WTC11 (cell line): ENCODE measurements at regions of chr5 and their contacts with region 1.

Region 1: GRCh38 chr5:90783460-90784333 is 225.1 kb downstream of the ADGRV1 start:
- DNase-seq: peak; percentile 77
- ATAC-seq: peak; percentile 91
- H3K4me3 Mint-ChIP-seq: no peak overlapping the region
- H3K27ac Mint-ChIP-seq: no peak overlapping the region
- H3K4me1 Mint-ChIP-seq: no peaks in the 10 kb centered on the region
- H3K27me3 Mint-ChIP-seq: no peaks in the 10 kb centered on the region
- CTCF ChIP-seq: peak; percentile 78

Region 2: GRCh38 chr5:90438100-90438499 is 345.6 kb before region 1 on chr5:
- CTCF ChIA-PET with region 1: interaction called, 12 read pairs
- POLR2A ChIA-PET with region 1: no interaction called
- DNase-seq: no peak
- ATAC-seq: no peak
- H3K4me3 Mint-ChIP-seq: no peak overlapping the region
- H3K27ac Mint-ChIP-seq: no peak overlapping the region
- H3K4me1 Mint-ChIP-seq: peaks cover 8% of the 10 kb centered on the region
- H3K27me3 Mint-ChIP-seq: no peaks in the 10 kb centered on the region
- CTCF ChIP-seq: no peak

Region 3: DNA sequence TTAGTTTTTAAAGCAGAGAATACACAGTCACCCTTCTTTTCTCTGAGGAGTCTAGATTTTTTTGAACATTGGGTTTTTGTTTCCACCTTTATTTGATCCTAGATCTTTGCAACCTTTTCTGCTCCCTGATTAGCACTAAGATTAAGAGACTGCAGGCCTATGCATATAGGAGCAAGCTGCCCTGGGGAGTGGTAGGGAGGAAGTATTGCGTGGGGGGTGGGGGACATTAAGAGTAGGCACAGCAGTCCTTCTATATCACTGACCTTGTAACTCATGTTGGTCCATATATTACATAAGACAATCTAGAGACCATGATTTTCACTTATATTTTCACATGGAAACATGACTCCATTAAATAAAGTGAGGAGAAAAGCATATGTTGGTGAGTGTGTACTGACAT is 76.0 kb before region 1 on chr5:
- CTCF ChIA-PET with region 1: interaction called, 14 read pairs
- POLR2A ChIA-PET with region 1: no interaction called
- DNase-seq: no peak
- ATAC-seq: no peak
- H3K4me3 Mint-ChIP-seq: no peak overlapping the region
- H3K27ac Mint-ChIP-seq: no peak overlapping the region
- H3K4me1 Mint-ChIP-seq: peaks cover 6% of the 10 kb centered on the region
- H3K27me3 Mint-ChIP-seq: no peaks in the 10 kb centered on the region
- CTCF ChIP-seq: no peak

Region 4: DNA sequence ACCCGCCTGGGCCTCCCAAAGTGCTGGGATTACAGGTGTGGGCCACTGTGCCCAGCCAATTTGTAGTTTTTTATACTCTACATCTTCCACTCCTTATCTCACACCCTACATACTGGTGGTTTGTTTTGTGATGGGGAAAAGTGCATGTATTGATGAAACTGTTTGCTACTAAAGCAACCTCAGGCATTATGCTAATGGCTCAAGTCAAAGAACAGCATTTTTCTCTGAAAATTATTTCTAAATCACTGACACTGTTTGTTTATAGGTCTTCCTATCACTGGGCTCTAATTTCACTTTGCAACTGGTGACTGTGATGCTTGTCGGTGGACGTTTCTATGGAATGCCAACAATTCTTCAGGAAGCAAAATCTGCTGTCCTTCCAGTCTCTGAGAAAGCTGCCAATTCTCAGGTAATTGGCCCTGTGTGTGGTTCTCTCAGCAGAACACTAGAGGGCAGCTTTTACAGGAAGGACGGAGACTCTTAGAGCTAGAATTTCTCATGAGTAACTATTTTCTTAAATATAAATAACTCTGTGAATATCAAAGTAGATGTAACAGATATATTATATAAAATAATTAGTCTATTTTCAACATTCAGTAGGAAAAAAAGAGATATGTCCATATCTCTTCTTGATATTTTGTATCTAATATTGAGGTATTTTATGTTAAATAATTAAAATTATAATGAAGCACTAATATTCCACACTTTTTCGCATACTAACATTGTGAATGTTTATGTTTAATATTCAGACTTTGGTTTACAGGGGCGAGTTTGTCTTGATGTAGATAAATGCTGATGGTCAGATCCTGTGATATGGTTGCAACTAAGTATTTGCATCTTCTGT is 19.0 kb after region 1 on chr5:
- CTCF ChIA-PET with region 1: interaction called, 17 read pairs
- POLR2A ChIA-PET with region 1: no interaction called
- DNase-seq: peak; percentile 41
- ATAC-seq: peak; percentile 94
- H3K4me3 Mint-ChIP-seq: no peak overlapping the region
- H3K27ac Mint-ChIP-seq: peak overlapping the region; percentile 91
- H3K4me1 Mint-ChIP-seq: 0 out of 2 replicates have a peak, but pooled peaks cover 3% of the 10 kb centered on the region
- H3K27me3 Mint-ChIP-seq: no peaks in the 10 kb centered on the region; the same call in none of the 2 replicates
- CTCF ChIP-seq: peak; percentile 43; the same call in 1 of the 2 replicates